Right ventricle myocardium inferior (tissue), 1 donor: ENCODE measurements at regions of chr19 and their contacts with region 1.

Region 1: DNA sequence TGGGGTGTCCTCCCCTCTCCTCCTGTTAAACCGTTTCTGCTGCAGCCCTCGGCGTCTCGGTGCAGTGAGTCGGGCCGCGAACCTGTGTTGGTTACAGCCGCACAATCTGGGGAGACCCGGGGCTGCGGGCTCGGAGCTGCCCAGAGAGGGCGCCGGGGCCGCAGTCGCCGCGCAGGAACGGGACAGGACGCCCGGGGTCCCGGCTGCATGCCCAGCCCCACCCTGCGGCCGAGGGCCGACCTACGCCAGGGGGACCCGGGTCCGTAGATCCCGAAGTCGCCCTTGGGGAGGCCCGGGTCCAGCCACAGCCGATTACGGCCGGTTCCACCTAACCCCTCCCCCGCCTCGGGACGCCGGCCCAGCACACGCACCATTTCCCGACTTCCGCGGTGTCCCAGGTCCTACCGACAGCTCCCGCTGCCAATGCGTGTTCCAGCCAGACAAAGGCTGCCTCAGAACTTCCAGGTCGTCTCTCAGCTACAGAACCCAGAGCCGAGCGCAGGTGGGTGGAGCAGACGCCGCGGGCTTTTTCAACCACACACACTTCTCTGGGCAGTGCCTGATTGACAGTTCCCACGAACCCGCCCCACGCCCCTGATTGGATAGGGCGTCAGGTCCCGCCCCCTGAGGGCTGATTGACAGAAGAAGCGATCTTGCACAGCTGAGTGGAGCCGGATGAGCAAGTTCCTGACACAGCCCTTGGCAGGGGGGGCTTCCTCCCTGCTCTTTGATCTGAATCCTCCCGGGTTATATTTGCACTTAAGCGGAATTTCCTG is at the start of gene ZNF443:
- DNase-seq: peak; percentile 98
- ATAC-seq: peak; percentile 100
- total RNA-seq, gene ZNF443: 1.9 TPM

Region 2: GRCh38 chr19:12484371-12485051 is 43.8 kb after region 1 on chr19 and contains the start of gene ZNF709:
- intact Hi-C with region 1: loop called (anchors 1 kb)
- DNase-seq: peak; percentile 92
- ATAC-seq: peak; percentile 98
- total RNA-seq, gene ZNF709: 2.1 TPM